Activated CD4-positive, alpha-beta T cell treated with anti-CD3 and anti-CD28 coated beads for 36 hours (primary cell): ENCODE measurements at regions of chr12 and their contacts with region 1.

Region 1: GRCh38 chr12:88141770-88142609 is at the starts of genes CEP290 and TMTC3:
- DNase-seq: peak; percentile 95
- ATAC-seq: peak; percentile 98
- H3K4me3 Mint-ChIP-seq: peak within 1 kb of the TSS; percentile 94
- H3K27ac Mint-ChIP-seq: peak within 1 kb of the TSS; percentile 92
- H3K4me1 Mint-ChIP-seq: peaks cover 42% of the 10 kb centered on the region
- H3K27me3 Mint-ChIP-seq: no peaks in the 10 kb centered on the region
- total RNA-seq, gene CEP290: 15.5 to 17.0 TPM
- total RNA-seq, gene TMTC3: 5.8 to 6.2 TPM

Region 2: GRCh38 chr12:88035271-88035906 is 106.6 kb before region 1 on chr12:
- CTCF ChIA-PET with region 1: no interaction called
- POLR2A ChIA-PET with region 1: no interaction called
- intact Hi-C with region 1: loop called (anchors 1 kb)
- DNase-seq: peak; percentile 94
- ATAC-seq: peak; percentile 98
- H3K4me3 Mint-ChIP-seq: peak overlapping the region; percentile 82
- H3K27ac Mint-ChIP-seq: peak overlapping the region; percentile 90
- H3K4me1 Mint-ChIP-seq: peaks cover 54% of the 10 kb centered on the region
- H3K27me3 Mint-ChIP-seq: no peaks in the 10 kb centered on the region

Region 3: GRCh38 chr12:88235183-88235833 is 93.3 kb after region 1 on chr12:
- CTCF ChIA-PET with region 1: no interaction called
- POLR2A ChIA-PET with region 1: no interaction called
- intact Hi-C with region 1: loop called (anchors 1 to 5 kb)
- DNase-seq: peak; percentile 58
- ATAC-seq: peak; percentile 85
- H3K4me3 Mint-ChIP-seq: no peak overlapping the region
- H3K27ac Mint-ChIP-seq: peak overlapping the region; percentile 78
- H3K4me1 Mint-ChIP-seq: peaks cover 36% of the 10 kb centered on the region
- H3K27me3 Mint-ChIP-seq: no peaks in the 10 kb centered on the region